Mammary epithelial cell (primary cell): ENCODE measurements at regions of chr4 and their contacts with region 1.

Region 1: DNA sequence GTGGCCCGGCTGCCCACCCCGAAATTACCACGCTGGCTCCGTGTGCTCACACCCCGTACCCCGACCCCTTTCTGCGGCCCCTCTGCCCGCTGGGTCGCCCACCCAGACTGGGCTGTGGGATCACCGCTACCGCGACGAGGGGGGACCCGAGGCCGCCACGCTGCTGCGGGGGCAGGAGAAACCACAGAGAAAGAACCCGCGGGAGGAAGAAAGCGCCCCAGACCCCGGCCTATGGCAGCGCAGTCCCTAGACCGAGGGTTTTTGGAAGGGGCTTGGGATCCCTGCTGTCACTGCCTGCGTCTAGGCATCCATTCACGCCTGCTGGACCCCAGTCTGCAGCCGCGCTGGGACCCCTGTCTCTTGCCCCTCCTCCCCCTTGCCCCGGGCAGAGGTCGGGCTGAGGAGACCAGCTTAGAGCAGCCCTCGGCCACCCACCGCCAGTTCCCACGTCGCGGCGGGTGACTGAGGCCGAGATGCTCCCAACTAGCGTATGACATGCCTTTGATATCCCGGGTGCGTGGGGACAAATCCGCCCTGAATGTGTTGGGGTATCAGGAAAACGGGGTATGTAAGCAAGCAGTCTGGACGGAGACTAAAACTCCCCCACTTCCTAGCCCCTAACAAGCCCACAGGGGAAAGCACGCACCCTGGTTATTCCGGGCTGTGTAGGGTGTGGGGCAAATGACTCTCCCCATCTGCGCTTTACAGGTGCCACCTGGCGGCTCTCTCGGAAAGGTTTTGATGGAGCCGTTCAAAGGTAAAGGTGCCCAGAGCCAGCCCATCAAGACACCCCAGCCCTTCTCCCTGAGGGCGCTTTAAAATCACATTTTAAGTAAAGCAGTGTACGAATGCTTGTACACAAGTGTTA is 862 bp upstream of the INPP4B start:
- DNase-seq: peak; percentile 68
- H3K4me3 ChIP-seq: peak overlapping the region; percentile 59 to 88 (median 73)
- H3K27ac ChIP-seq: no peak overlapping the region
- H3K4me1 ChIP-seq: peaks cover 4% of the 10 kb centered on the region
- H3K27me3 ChIP-seq: peaks cover 3% of the 10 kb centered on the region
- CTCF ChIP-seq: peak; percentile 67 to 81

Region 2: DNA sequence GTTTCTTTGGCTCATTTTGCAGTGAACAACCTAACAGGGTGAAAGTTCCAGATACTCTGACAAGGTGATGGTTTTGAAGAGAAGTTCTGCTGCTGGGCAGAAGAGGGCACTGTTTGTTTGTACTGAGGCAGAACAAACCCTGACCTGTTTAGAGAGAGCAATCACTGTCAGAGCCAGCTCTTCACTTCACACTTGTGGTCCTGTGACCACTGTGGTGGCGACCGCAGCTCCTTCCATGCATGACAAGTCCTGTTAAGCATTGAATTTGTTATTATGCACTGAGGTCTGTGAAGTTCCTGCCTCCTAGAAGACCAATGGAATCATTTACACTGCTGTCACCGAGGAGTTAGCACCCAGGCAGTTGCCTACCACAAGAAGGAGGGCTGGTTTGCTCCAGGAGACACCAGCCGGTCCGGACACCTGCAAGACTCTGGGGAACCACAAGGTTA is 1539.7 kb before region 1 on chr4:
- CTCF ChIA-PET with region 1: no interaction called
- dilution Hi-C with region 1: no loop called
- in situ Hi-C with region 1: loop called in 1 of 2 experiments (anchors 25 kb)
- intact Hi-C with region 1: loop called (anchors 2 kb)
- DNase-seq: peak; percentile 52
- H3K4me3 ChIP-seq: no peak overlapping the region
- H3K27ac ChIP-seq: no peak overlapping the region
- H3K4me1 ChIP-seq: no peaks in the 10 kb centered on the region
- H3K27me3 ChIP-seq: no peaks in the 10 kb centered on the region
- CTCF ChIP-seq: peak; percentile 84 to 85

Region 3: DNA sequence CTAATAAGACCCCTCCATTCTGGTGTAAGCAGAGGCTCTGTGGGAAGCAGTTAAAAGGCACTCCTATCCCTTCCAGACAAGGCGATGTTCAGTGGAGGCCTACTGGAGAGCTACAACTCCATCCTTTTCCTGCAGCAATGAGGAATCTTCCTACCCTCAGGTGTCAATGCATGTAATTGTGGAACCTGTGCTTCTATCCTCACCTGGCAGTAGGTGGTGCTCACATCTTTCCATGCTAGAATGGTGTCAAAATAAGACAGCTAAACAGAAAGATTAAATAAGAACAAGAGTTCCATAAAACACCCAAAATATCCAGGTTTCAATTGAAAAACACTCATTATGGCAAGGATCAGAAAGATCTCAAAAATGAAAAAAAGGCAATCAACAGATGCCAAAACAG is 986.0 kb before region 1 on chr4:
- CTCF ChIA-PET with region 1: no interaction called
- dilution Hi-C with region 1: no loop called
- in situ Hi-C with region 1: no loop called
- intact Hi-C with region 1: loop called (anchors 1 kb)
- DNase-seq: peak; percentile 12
- H3K4me3 ChIP-seq: no peak overlapping the region
- H3K27ac ChIP-seq: no peak overlapping the region
- H3K4me1 ChIP-seq: no peaks in the 10 kb centered on the region
- H3K27me3 ChIP-seq: no peaks in the 10 kb centered on the region
- CTCF ChIP-seq: peak; percentile 22 to 58

Region 4: DNA sequence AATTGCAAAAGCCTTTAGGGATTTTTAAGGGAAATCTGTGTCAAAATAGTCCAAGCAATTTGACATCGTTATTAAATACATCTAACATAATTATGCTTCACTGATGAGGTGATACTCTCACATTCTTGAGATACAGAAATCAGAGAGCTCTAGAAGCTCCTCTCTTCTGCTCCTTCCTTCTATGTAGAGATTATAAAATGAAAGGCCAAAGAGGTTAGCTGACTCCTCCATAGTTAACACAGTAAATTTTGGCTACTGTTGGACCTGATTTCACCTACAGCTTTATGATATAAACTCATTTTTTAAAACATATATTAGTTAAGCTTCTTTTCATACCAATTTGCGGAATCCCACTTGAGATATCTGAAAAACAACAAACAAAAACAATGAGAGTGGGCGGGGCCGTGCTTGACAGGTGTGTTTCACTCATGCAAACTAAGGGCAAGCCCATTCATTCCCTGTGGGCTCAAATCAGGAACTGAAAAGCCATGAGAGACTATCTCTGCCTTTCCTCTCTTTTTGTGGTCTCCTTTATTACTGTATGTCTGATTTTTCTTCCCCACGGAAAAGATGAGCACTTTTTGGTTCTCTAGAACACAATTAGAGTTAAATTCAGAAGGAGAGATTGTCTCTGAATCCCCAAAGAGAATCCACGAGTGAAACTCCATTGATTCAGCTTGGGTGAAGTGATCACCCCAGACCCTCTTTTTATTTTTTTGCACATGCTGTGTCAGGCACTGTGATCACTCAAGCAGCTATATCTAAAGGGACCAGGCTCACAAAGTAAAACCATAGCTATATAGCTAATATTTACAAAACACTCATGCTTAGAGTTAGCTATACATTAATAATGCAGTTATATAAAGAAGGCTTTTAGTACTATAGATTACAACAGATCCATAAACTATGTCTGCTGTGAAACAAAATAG is 644.3 kb before region 1 on chr4:
- CTCF ChIA-PET with region 1: no interaction called
- dilution Hi-C with region 1: no loop called
- in situ Hi-C with region 1: no loop called
- intact Hi-C with region 1: loop called (anchors 5 kb)
- DNase-seq: no peak
- H3K4me3 ChIP-seq: no peak overlapping the region
- H3K27ac ChIP-seq: no peak overlapping the region
- H3K4me1 ChIP-seq: no peaks in the 10 kb centered on the region
- H3K27me3 ChIP-seq: no peaks in the 10 kb centered on the region
- CTCF ChIP-seq: no peak

Region 5: GRCh38 chr4:142480244-142480643 is 366.7 kb before region 1 on chr4:
- CTCF ChIA-PET with region 1: no interaction called
- dilution Hi-C with region 1: no loop called
- in situ Hi-C with region 1: no loop called
- intact Hi-C with region 1: loop called (anchors 5 kb)
- DNase-seq: peak; percentile 30
- H3K4me3 ChIP-seq: no peak overlapping the region
- H3K27ac ChIP-seq: no peak overlapping the region
- H3K4me1 ChIP-seq: peaks cover 8% of the 10 kb centered on the region
- H3K27me3 ChIP-seq: no peaks in the 10 kb centered on the region
- CTCF ChIP-seq: no peak

Region 6: DNA sequence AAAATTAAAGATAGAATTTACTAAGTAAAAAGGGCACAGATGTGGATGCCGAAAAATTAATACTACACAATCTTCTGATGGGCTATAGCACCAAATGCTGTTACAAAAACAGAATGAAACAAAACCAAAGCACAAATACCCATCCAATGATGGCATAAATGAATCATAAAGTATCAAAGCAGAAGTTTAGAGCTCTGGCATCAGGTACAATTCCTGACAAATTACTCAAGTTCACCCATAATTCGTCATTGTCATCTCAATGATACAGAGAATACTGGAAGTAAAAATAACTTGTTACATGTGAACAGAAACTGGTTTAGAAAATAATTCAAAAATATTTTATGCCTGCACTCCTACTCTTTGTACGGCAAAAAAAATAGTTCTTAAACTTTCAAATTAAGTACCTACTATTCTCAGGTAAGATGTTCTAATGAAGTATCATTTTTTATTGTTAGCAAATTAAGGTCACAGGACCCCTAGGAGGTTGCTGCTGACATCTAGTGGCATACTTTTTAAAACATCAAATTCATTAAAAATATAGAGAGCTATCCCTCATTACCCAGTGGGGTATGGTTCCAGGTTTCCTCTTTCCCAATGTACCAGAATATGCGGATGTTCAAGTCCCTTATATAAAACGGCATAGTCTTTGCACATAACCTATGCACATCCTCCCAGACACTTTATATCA is 127.0 kb before region 1 on chr4:
- CTCF ChIA-PET with region 1: no interaction called
- dilution Hi-C with region 1: no loop called
- in situ Hi-C with region 1: no loop called
- intact Hi-C with region 1: loop called (anchors 2 kb)
- DNase-seq: peak; percentile 84
- H3K4me3 ChIP-seq: peak overlapping the region in 1 of 3 experiments; percentile 15
- H3K27ac ChIP-seq: peak overlapping the region; percentile 84
- H3K4me1 ChIP-seq: peaks cover 19% of the 10 kb centered on the region
- H3K27me3 ChIP-seq: no peaks in the 10 kb centered on the region
- CTCF ChIP-seq: peak; percentile 49 to 59

Region 7: GRCh38 chr4:142801966-142802365 is 45.0 kb before region 1 on chr4:
- CTCF ChIA-PET with region 1: no interaction called
- dilution Hi-C with region 1: no loop called
- in situ Hi-C with region 1: no loop called
- intact Hi-C with region 1: no loop called
- DNase-seq: peak; percentile 90
- H3K4me3 ChIP-seq: no peak overlapping the region
- H3K27ac ChIP-seq: no peak overlapping the region
- H3K4me1 ChIP-seq: peaks cover 15% of the 10 kb centered on the region
- H3K27me3 ChIP-seq: no peaks in the 10 kb centered on the region
- CTCF ChIP-seq: no peak

Region 8: GRCh38 chr4:142933207-142933606 is 86.2 kb after region 1 on chr4:
- CTCF ChIA-PET with region 1: no interaction called
- dilution Hi-C with region 1: no loop called
- in situ Hi-C with region 1: no loop called
- intact Hi-C with region 1: no loop called
- DNase-seq: no peak
- H3K4me3 ChIP-seq: no peak overlapping the region
- H3K27ac ChIP-seq: no peak overlapping the region
- H3K4me1 ChIP-seq: no peaks in the 10 kb centered on the region
- H3K27me3 ChIP-seq: peaks cover 4% of the 10 kb centered on the region
- CTCF ChIP-seq: no peak

Region 9: GRCh38 chr4:143251779-143252178 is 404.8 kb after region 1 on chr4:
- CTCF ChIA-PET with region 1: no interaction called
- dilution Hi-C with region 1: no loop called
- in situ Hi-C with region 1: no loop called
- intact Hi-C with region 1: no loop called
- DNase-seq: peak; percentile 74
- H3K4me3 ChIP-seq: no peak overlapping the region
- H3K27ac ChIP-seq: no peak overlapping the region
- H3K4me1 ChIP-seq: peaks cover 32% of the 10 kb centered on the region
- H3K27me3 ChIP-seq: no peaks in the 10 kb centered on the region
- CTCF ChIP-seq: no peak